ENCODE measurements at regions of chr4 and their contacts with region 1.

Region 1: DNA sequence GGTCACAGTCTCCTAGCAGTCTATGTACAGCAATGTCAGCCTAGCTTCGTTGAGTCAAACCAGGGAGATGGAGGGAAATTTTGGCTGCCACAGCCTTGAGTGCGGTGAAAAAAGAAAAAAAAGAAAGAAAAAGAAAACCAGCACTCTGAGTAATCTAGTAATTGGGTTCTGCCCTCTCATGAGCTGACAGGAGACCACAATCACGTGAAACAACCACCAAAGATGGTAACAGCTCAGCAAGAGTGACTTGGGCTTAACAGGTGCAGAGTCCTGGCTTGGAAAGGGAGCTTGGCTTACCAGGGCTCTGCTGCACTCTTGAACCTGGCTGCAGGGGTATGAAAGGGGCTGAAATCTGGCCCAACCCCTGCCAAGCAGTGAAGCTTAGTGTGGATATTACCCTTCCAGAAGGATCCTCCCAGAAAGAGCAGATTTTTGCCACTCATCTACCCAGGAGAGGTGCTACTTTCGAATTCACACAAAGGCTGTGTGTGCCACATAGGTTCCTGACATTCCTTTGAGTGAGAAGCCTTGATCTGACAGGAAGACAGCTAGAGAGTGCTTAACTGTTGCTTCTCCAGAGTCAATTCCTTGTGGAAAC is 350.3 kb downstream of the PTTG2 start:
- DNase-seq: peak; percentile 94
- H3K4me3 Mint-ChIP-seq: peak overlapping the region; percentile 66
- H3K27ac Mint-ChIP-seq: peak overlapping the region; percentile 83
- H3K4me1 Mint-ChIP-seq: peaks cover 49% of the 10 kb centered on the region
- H3K27me3 Mint-ChIP-seq: peaks cover 47% of the 10 kb centered on the region

Region 2: DNA sequence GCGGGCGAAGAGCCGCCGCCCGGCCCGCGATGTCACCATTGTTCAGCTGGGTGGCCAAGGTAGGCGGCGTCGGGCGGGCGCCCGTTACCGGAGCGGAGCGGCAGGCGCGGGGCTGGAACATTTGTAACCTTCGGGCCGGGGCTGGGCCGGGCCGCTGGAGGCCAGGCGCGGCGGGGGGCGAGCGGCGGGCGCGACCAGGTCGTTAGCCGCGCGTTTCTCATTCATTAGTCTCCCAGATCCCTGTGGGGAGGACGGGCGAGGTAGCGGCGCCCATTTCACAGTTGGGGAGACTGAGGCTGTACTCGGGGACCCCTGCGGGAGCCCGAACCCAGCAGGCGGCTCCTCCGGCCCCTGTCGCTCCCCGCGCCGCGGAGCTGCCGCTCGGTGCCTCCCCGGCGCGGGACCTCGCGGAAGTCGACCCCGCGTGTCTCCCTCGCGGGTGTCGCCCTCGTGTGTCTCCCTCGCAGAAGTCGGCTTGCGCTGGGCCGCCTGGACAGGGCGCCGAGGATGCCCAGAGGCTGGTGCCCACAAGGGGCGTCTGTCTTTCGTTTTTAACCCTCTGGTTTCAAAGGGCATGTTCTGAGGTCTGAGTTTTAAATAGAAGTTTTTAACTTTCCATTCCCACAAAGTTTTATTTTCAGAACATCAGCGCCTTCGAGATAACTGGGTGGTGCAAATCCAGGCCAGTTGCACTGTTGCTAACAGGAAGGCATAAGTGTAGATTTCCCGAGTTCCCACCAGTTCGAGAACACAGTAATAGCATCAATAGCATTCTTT is 332.9 kb before region 1 on chr4:
- intact Hi-C with region 1: loop called (anchors 5 kb)
- DNase-seq: peak; percentile 93
- H3K4me3 Mint-ChIP-seq: peak overlapping the region; percentile 87
- H3K27ac Mint-ChIP-seq: peak overlapping the region; percentile 86
- H3K4me1 Mint-ChIP-seq: peaks cover 24% of the 10 kb centered on the region
- H3K27me3 Mint-ChIP-seq: peaks cover 2% of the 10 kb centered on the region

Region 3: DNA sequence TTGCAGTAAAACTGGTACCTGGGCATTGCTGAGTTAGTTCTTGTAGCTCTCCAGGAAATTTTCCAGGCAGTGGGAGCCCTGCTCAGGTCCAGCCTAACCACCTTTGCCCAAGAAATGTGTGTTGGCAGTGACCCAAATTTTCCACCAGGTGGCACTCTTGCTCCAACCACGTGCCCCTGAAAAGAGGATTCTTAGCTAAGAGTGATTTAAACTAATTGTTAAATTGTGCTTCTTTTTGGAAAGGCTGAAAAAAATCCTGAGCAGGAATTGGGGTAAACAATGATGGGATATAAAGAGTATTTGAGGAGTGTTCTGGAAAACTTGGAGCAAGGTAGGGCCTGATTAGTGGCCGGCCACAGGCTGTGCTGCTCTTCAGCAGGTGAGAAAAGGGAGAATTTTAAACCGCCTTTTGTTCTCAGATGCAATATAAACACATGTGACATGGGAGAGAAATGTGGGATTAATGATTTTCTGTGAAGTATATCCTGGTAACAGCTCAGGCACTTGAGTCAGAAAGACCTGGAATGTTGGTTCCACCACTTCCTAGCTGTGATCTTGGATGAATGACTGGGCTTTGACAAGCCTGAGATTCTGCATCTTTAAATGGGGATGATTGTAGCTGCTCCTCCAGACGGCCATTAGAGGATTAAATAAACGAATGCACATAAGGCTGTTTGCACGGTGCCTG is 130.7 kb before region 1 on chr4:
- intact Hi-C with region 1: loop called (anchors 2 kb)
- DNase-seq: peak; percentile 92
- H3K4me3 Mint-ChIP-seq: no peak overlapping the region
- H3K27ac Mint-ChIP-seq: no peak overlapping the region
- H3K4me1 Mint-ChIP-seq: peaks cover 30% of the 10 kb centered on the region
- H3K27me3 Mint-ChIP-seq: peaks cover 17% of the 10 kb centered on the region

Region 4: GRCh38 chr4:38523524-38524448 is 213.2 kb after region 1 on chr4:
- intact Hi-C with region 1: loop called (anchors 1 kb)
- DNase-seq: peak; percentile 81
- H3K4me3 Mint-ChIP-seq: no peak overlapping the region
- H3K27ac Mint-ChIP-seq: peak overlapping the region; percentile 18
- H3K4me1 Mint-ChIP-seq: peaks cover 13% of the 10 kb centered on the region
- H3K27me3 Mint-ChIP-seq: peaks cover 27% of the 10 kb centered on the region

Region 5: GRCh38 chr4:38752941-38753806 is 442.6 kb after region 1 on chr4:
- intact Hi-C with region 1: loop called (anchors 2 kb)
- DNase-seq: no peak
- H3K4me3 Mint-ChIP-seq: no peak overlapping the region
- H3K27ac Mint-ChIP-seq: no peak overlapping the region
- H3K4me1 Mint-ChIP-seq: peaks cover 3% of the 10 kb centered on the region
- H3K27me3 Mint-ChIP-seq: peaks cover 2% of the 10 kb centered on the region

Measured in activated CD4-positive, alpha-beta T cell treated with anti-CD3 and anti-CD28 coated beads, Interleukin-2, amount 10 ng/mL, durations not matched to agents 24 days and 14 days (primary cell).